CD14-positive monocyte (primary cell): ENCODE measurements at regions of chr17 and their contacts with region 1.

Region 1: GRCh38 chr17:65055348-65056261 is 935 bp downstream of the GNA13 start:
- DNase-seq: peak; percentile 54 to 77 (median 61)
- H3K4me3 ChIP-seq: peak overlapping the region; percentile 83 to 96 (median 96)
- H3K4me3 Mint-ChIP-seq: peak overlapping the region; percentile 97 to 98
- H3K27ac ChIP-seq: peak overlapping the region; percentile 95
- H3K27ac Mint-ChIP-seq: peak overlapping the region; percentile 92 to 99 (median 97)
- H3K4me1 ChIP-seq: peaks cover 45 to 71% of the 10 kb centered on the region in 2 donors
- H3K4me1 Mint-ChIP-seq: peaks cover 61% of the 10 kb centered on the region
- H3K27me3 ChIP-seq: no peaks in the 10 kb centered on the region
- H3K27me3 Mint-ChIP-seq: peaks cover 0 to 4% (median 0%) of the 10 kb centered on the region in 3 donors
- CTCF ChIP-seq: no peak

Region 2: GRCh38 chr17:64975329-64976087 is 80.1 kb before region 1 on chr17:
- intact Hi-C with region 1: loop called in 1 of 2 experiments (anchors 5 kb)
- DNase-seq: peak; percentile 95 to 99 (median 96)
- H3K4me3 ChIP-seq: peak overlapping the region; percentile 37 to 84 (median 75)
- H3K4me3 Mint-ChIP-seq: peak overlapping the region; percentile 88 to 95
- H3K27ac ChIP-seq: peak overlapping the region; percentile 98
- H3K27ac Mint-ChIP-seq: peak overlapping the region; percentile 98 to 100 (median 99)
- H3K4me1 ChIP-seq: peaks cover 24 to 27% of the 10 kb centered on the region in 2 donors
- H3K4me1 Mint-ChIP-seq: peaks cover 27% of the 10 kb centered on the region
- H3K27me3 ChIP-seq: no peaks in the 10 kb centered on the region
- H3K27me3 Mint-ChIP-seq: peaks cover 0 to 4% (median 0%) of the 10 kb centered on the region in 3 donors
- CTCF ChIP-seq: no peak

Region 3: DNA sequence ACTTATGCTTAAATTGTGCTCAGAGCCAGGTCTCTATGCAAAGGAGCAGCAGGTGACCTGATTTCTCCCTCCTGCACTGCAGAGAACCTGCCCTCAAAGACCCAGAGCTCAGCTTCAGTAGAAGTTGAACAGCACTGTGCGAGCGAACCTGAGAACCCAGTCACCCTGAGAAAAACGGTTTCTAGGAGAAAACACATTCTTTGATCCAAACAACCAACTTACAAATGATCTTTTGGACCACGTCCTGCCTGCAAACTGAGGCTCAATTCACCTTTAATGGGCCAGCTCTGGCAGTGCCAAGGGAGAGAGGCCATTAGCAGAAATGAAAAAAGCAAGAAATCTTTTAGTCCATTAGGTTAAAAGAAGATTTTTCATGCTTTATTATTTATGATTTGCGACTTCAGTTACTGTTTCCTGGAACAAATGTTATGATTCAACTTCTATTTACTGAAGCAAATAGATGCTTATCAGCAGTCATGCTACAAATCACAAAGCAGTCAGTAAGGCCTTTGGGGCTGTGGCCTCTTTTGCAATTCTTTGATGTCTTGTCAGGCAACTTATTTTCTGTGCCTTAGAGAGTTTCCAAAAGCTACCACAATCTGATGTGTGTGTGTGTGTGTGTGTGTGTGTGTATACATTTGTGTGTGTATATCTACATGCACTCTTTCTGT is 70.6 kb before region 1 on chr17:
- intact Hi-C with region 1: loop called in 1 of 2 experiments (anchors 5 kb)
- DNase-seq: peak; percentile 29 to 51 (median 34)
- H3K4me3 ChIP-seq: peak overlapping the region in 1 of 3 experiments; percentile 55
- H3K4me3 Mint-ChIP-seq: peak overlapping the region; percentile 74 to 83
- H3K27ac ChIP-seq: peak overlapping the region; percentile 98
- H3K27ac Mint-ChIP-seq: peak overlapping the region; percentile 100
- H3K4me1 ChIP-seq: peaks cover 23 to 34% of the 10 kb centered on the region in 2 donors
- H3K4me1 Mint-ChIP-seq: peaks cover 36% of the 10 kb centered on the region
- H3K27me3 ChIP-seq: no peaks in the 10 kb centered on the region
- H3K27me3 Mint-ChIP-seq: peaks cover 0 to 1% (median 0%) of the 10 kb centered on the region in 3 donors
- CTCF ChIP-seq: no peak

Region 4: DNA sequence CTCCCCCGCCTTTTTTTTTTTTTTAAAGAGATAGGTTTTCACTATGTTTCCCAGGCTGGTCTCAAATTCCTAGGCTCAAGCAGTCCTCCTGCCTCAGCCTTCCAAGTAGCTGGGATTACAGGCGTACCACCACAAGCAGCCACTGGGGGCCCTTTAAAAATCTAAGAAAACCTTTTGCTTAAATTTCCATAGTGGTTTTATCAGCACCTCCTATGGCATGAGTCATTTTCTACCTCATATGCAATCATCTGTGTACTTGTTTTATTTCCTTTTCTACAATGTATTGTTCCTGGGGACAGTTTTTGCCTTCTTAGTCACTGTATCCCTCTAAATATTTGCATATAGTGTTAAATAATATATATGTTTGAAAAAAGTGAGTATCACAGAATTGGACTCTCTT is 28.3 kb before region 1 on chr17:
- intact Hi-C with region 1: loop called in 1 of 2 experiments (anchors 5 kb)
- DNase-seq: peak; percentile 64 to 87 (median 85)
- H3K4me3 ChIP-seq: no peak overlapping the region
- H3K4me3 Mint-ChIP-seq: no peak overlapping the region
- H3K27ac ChIP-seq: peak overlapping the region; percentile 36 to 76
- H3K27ac Mint-ChIP-seq: peak overlapping the region in 6 of 7 donors; percentile 82 to 91 (median 88)
- H3K4me1 ChIP-seq: peaks cover 27 to 40% of the 10 kb centered on the region in 2 donors
- H3K4me1 Mint-ChIP-seq: peaks cover 50% of the 10 kb centered on the region
- H3K27me3 ChIP-seq: no peaks in the 10 kb centered on the region
- H3K27me3 Mint-ChIP-seq: no peaks in the 10 kb centered on the region
- CTCF ChIP-seq: peak; percentile 73

Region 5: GRCh38 chr17:65039336-65039988 is 16.1 kb before region 1 on chr17:
- intact Hi-C with region 1: no loop called
- DNase-seq: no peak
- H3K4me3 ChIP-seq: no peak overlapping the region
- H3K4me3 Mint-ChIP-seq: no peak overlapping the region
- H3K27ac ChIP-seq: peak overlapping the region in 1 of 2 donors; percentile 61
- H3K27ac Mint-ChIP-seq: peak overlapping the region in 4 of 7 donors; percentile 59 to 83 (median 76)
- H3K4me1 ChIP-seq: peaks cover 22 to 29% of the 10 kb centered on the region in 2 donors
- H3K4me1 Mint-ChIP-seq: peaks cover 60% of the 10 kb centered on the region
- H3K27me3 ChIP-seq: no peaks in the 10 kb centered on the region
- H3K27me3 Mint-ChIP-seq: no peaks in the 10 kb centered on the region
- CTCF ChIP-seq: no peak

Region 6: GRCh38 chr17:65078441-65079160 is 23.0 kb after region 1 on chr17:
- intact Hi-C with region 1: no loop called
- DNase-seq: no peak
- H3K4me3 ChIP-seq: no peak overlapping the region
- H3K4me3 Mint-ChIP-seq: no peak overlapping the region
- H3K27ac ChIP-seq: no peak overlapping the region
- H3K27ac Mint-ChIP-seq: no peak overlapping the region
- H3K4me1 ChIP-seq: no peaks in the 10 kb centered on the region
- H3K4me1 Mint-ChIP-seq: no peaks in the 10 kb centered on the region
- H3K27me3 ChIP-seq: no peaks in the 10 kb centered on the region
- H3K27me3 Mint-ChIP-seq: peaks cover 0 to 6% (median 0%) of the 10 kb centered on the region in 3 donors
- CTCF ChIP-seq: no peak

Region 7: DNA sequence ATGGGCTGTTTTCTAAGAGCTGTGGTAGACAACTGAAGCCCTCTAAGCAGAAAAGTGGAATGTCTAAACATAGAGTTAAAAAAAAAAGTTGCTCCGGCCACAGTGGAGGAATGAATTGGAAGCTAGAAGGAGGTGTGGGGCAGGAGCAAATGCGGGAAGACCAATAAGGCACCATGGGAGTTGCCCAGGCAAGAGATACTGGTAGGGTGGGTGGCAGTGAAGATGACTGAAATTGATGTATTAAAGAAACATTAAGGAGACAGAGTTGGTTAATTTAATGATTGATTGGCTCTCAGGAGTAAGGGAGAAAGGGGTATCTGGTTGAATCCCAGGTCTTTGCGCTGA is 33.7 kb after region 1 on chr17:
- intact Hi-C with region 1: no loop called
- DNase-seq: no peak
- H3K4me3 ChIP-seq: no peak overlapping the region
- H3K4me3 Mint-ChIP-seq: no peak overlapping the region
- H3K27ac ChIP-seq: no peak overlapping the region
- H3K27ac Mint-ChIP-seq: no peak overlapping the region
- H3K4me1 ChIP-seq: no peaks in the 10 kb centered on the region
- H3K4me1 Mint-ChIP-seq: no peaks in the 10 kb centered on the region
- H3K27me3 ChIP-seq: no peaks in the 10 kb centered on the region
- H3K27me3 Mint-ChIP-seq: peaks cover 6 to 12% (median 10%) of the 10 kb centered on the region in 3 donors
- CTCF ChIP-seq: no peak

Region 8: GRCh38 chr17:65100316-65101140 is 44.9 kb after region 1 on chr17:
- intact Hi-C with region 1: loop called in 1 of 2 experiments (anchors 5 kb)
- DNase-seq: peak; percentile 71 to 78 (median 76)
- H3K4me3 ChIP-seq: peak overlapping the region; percentile 35 to 77 (median 43)
- H3K4me3 Mint-ChIP-seq: peak overlapping the region; percentile 75
- H3K27ac ChIP-seq: peak overlapping the region in 1 of 2 donors; percentile 82
- H3K27ac Mint-ChIP-seq: peak overlapping the region; percentile 49 to 93 (median 88)
- H3K4me1 ChIP-seq: peaks cover 9 to 14% of the 10 kb centered on the region in 2 donors
- H3K4me1 Mint-ChIP-seq: peaks cover 9% of the 10 kb centered on the region
- H3K27me3 ChIP-seq: no peaks in the 10 kb centered on the region
- H3K27me3 Mint-ChIP-seq: peaks cover 0 to 15% (median 0%) of the 10 kb centered on the region in 3 donors
- CTCF ChIP-seq: peak; percentile 89